ENCODE measurements at regions of chr12 and their contacts with region 1.

Region 1: GRCh38 chr12:53500776-53501614 is at the start of gene TARBP2:
- DNase-seq: peak; percentile 99
- H3K4me3 ChIP-seq: peak within 1 kb of the TSS; percentile 73 to 86
- H3K27ac ChIP-seq: peak within 1 kb of the TSS; percentile 97 to 98
- H3K4me1 ChIP-seq: peaks cover 65% of the 10 kb centered on the region
- H3K27me3 ChIP-seq: no peaks in the 10 kb centered on the region
- CTCF ChIP-seq: peak in 1 of 3 experiments; percentile 7
- POLR2A ChIP-seq: no peak
- total RNA-seq, gene TARBP2: 67.6 to 73.1 TPM

Region 2: DNA sequence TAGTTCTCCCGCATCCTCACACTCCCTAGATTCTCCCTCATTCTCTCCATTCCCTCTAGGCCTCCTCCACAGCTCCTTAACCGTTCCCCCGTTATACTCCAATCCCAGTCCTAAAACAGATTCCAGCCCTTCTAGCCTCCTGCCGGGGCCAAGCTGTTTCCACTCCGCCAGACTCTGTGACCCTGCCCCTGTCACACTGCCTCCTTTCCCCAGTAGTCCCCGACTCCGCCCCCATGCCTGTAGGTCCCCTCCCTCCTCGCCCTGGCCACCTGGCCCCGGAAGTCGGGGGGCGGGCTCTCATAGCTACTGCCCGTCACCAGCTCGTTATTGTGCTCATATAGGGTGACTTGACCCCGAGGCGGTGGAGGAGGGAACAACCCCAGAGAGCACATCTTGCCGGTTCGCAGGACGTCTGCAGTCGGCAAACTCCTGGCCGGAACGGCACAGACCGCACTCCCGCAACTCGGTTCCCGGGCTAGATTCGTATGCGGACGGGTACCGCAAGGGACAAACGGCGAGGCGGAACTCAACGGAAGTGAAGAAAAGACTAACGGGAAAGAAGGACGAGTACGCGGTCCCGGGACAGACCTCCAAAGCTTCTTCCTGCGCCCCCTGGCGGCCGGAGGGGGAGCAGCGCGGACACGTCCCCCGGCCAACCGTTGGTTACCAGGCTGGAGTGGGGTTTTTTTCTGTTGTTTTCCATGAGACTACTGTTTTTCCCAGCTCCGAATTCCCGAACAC is 179.8 kb before region 1 on chr12 and contains the start of gene AAAS:
- intact Hi-C with region 1: loop called (anchors 10 kb)
- DNase-seq: peak; percentile 98
- H3K4me3 ChIP-seq: peak within 1 kb of the TSS; percentile 58 to 89
- H3K27ac ChIP-seq: peak within 1 kb of the TSS; percentile 88 to 90
- H3K4me1 ChIP-seq: peaks cover 19% of the 10 kb centered on the region
- H3K27me3 ChIP-seq: no peaks in the 10 kb centered on the region
- CTCF ChIP-seq: peak; percentile 99
- POLR2A ChIP-seq: no peak
- total RNA-seq, gene AAAS: 98.0 to 110 TPM

Region 3: GRCh38 chr12:53451661-53452158 is 49.3 kb before region 1 on chr12 and contains the start of gene PCBP2:
- intact Hi-C with region 1: loop called (anchors 10 kb)
- DNase-seq: peak; percentile 99
- H3K4me3 ChIP-seq: peak within 1 kb of the TSS; percentile 91 to 95
- H3K27ac ChIP-seq: peak within 1 kb of the TSS; percentile 99
- H3K4me1 ChIP-seq: peaks cover 19% of the 10 kb centered on the region
- H3K27me3 ChIP-seq: no peaks in the 10 kb centered on the region
- CTCF ChIP-seq: peak; percentile 82 to 98 (median 97)
- POLR2A ChIP-seq: no peak
- total RNA-seq, gene PCBP2: 553 to 632 TPM

Measured in testis (tissue), 5 donors.